ENCODE measurements at regions of chr19 and their contacts with region 1.

Region 1: GRCh38 chr19:53867225-53868090 is at the start of gene MYADM:
- DNase-seq: peak; percentile 99
- H3K4me3 ChIP-seq: peak within 1 kb of the TSS; percentile 52 to 88 (median 82)
- H3K27ac ChIP-seq: peak within 1 kb of the TSS; percentile 100
- H3K4me1 ChIP-seq: peaks cover 15% of the 10 kb centered on the region
- H3K27me3 ChIP-seq: no peaks in the 10 kb centered on the region
- CTCF ChIP-seq: no peak
- POLR2A ChIP-seq: peak; percentile 54
- total RNA-seq, gene MYADM: 128 and 133 TPM in 2 replicates

Region 2: GRCh38 chr19:53849237-53849676 is 18.2 kb before region 1 on chr19:
- CTCF ChIA-PET with region 1: interaction called, 23 read pairs
- POLR2A ChIA-PET with region 1: interaction called, 5 read pairs
- dilution Hi-C with region 1: no loop called
- intact Hi-C with region 1: loop called (anchors 1 kb)
- DNase-seq: peak; percentile 90
- H3K4me3 ChIP-seq: peak overlapping the region in 1 of 3 experiments; percentile 48
- H3K27ac ChIP-seq: peak overlapping the region; percentile 95
- H3K4me1 ChIP-seq: peaks cover 11% of the 10 kb centered on the region
- H3K27me3 ChIP-seq: no peaks in the 10 kb centered on the region
- CTCF ChIP-seq: no peak
- POLR2A ChIP-seq: no peak

Region 3: GRCh38 chr19:53927739-53928138 is 60.3 kb after region 1 on chr19:
- CTCF ChIA-PET with region 1: no interaction called
- POLR2A ChIA-PET with region 1: no interaction called
- dilution Hi-C with region 1: no loop called
- intact Hi-C with region 1: no loop called
- DNase-seq: peak; percentile 51
- H3K4me3 ChIP-seq: no peak overlapping the region
- H3K27ac ChIP-seq: no peak overlapping the region
- H3K4me1 ChIP-seq: no peaks in the 10 kb centered on the region
- H3K27me3 ChIP-seq: no peaks in the 10 kb centered on the region
- CTCF ChIP-seq: no peak
- POLR2A ChIP-seq: no peak

Region 4: DNA sequence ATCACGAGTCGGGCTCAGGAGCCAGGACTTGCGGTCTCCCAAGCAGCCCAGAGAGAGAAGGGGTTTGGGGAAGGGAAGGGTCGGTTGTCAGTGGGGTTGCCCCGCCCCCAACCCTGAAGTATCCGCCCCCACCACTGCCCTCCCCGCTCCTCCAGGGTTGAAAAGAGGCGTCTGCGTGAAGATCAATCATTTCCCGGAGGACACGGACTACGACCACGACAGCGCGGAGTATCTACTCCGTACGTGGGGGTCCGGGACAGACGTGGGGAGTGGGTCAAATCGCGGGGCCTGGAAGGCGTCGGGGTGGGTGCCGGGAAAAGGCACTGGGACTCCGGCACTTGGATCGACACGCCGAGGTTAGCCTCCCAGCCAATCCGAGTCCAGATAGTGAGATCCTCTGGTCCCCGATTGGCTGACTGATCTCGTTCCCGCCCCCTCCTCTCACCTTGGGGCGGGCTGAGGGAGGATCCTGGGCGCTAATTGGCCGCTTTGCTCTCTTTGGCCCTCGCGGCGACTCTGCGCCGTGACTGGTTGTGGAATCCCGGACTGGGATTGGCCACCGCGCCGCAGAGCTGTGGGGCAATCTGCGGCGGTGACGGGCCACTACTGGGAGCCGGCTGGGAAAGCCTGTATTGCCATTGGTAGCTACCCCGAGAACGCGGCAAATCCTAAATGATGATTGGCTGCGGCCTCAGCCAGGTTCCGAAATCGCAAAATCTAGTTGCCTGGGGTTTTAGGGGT is 110.7 kb after region 1 on chr19:
- CTCF ChIA-PET with region 1: interaction called, 4 read pairs
- POLR2A ChIA-PET with region 1: interaction called, 7 read pairs
- dilution Hi-C with region 1: no loop called
- intact Hi-C with region 1: loop called (anchors 1 kb)
- DNase-seq: peak; percentile 94
- H3K4me3 ChIP-seq: peak overlapping the region in 1 of 3 experiments; percentile 30
- H3K27ac ChIP-seq: no peak overlapping the region
- H3K4me1 ChIP-seq: peaks cover 19% of the 10 kb centered on the region
- H3K27me3 ChIP-seq: no peaks in the 10 kb centered on the region
- CTCF ChIP-seq: no peak
- POLR2A ChIP-seq: no peak

Region 5: GRCh38 chr19:54137086-54137921 is 269.8 kb after region 1 on chr19 and contains the start of gene CNOT3:
- CTCF ChIA-PET with region 1: no interaction called
- POLR2A ChIA-PET with region 1: interaction called, 3 read pairs
- dilution Hi-C with region 1: no loop called
- intact Hi-C with region 1: loop called (anchors 1 kb)
- DNase-seq: peak; percentile 100
- H3K4me3 ChIP-seq: peak within 1 kb of the TSS; percentile 66 to 98 (median 69)
- H3K27ac ChIP-seq: peak within 1 kb of the TSS; percentile 71
- H3K4me1 ChIP-seq: peaks cover 17% of the 10 kb centered on the region
- H3K27me3 ChIP-seq: no peaks in the 10 kb centered on the region
- CTCF ChIP-seq: no peak
- POLR2A ChIP-seq: peak; percentile 72
- total RNA-seq, gene CNOT3: 62.4 and 74.7 TPM in 2 replicates

Region 6: DNA sequence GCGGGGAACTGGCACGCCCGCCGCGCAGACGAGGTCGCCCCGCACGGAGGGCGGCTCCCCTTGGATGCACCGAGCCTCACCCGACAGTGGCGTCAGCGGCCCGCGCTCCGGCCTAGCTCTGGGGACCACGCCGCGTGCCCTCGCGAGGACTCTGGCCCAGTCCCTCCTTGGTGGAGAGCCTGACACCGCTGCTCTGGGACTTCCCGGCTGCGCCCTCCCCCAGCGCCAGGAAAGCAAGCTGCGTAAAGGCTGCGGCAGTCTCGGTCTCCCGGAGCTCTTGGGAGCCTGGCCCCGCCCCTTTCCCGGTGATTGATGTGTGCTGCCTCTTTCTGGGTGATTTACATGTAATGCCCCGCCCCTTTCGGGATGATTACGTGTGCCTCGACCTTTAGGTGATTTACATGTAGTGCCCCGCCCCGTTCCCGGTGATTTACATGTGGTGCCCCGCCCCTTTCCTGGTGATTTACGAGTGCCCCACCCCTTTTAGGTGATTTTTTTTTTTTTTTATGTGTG is 596.1 kb after region 1 on chr19 and contains the start of gene LENG9:
- CTCF ChIA-PET with region 1: no interaction called
- POLR2A ChIA-PET with region 1: no interaction called
- dilution Hi-C with region 1: no loop called
- intact Hi-C with region 1: loop called (anchors 5 kb)
- DNase-seq: peak; percentile 98
- H3K4me3 ChIP-seq: peak within 1 kb of the TSS; percentile 28 to 46 (median 38)
- H3K27ac ChIP-seq: peak within 1 kb of the TSS; percentile 85
- H3K4me1 ChIP-seq: peaks cover 29% of the 10 kb centered on the region
- H3K27me3 ChIP-seq: no peaks in the 10 kb centered on the region
- CTCF ChIP-seq: no peak
- POLR2A ChIP-seq: peak; percentile 95
- total RNA-seq, gene LENG9: 2.8 and 3.2 TPM in 2 replicates